CD4-positive, alpha-beta T cell (primary cell): ENCODE measurements at regions of chr17 and their contacts with region 1.

Region 1: DNA sequence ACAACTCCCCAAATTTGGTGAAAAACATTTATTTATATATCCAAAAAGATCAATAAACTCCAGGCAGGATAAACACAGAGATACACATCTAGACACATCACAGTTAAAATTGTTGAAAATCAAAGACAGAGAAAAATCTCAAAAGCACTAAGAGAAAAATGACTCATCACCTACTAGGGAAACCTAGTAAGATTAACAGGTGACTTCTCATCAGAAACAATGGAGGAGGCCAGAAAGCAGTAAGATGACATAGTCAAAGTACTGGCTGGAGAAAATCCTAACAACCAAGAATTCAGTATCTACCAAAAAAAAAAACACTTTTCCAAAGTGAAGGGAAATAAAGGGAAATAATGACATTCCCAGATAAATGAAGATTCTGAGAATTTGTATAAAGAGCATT is 33.8 kb downstream of the ULK2 start:
- DNase-seq: no peak
- ATAC-seq: no peak
- H3K4me3 ChIP-seq: no peak overlapping the region
- H3K4me3 Mint-ChIP-seq: no peak overlapping the region
- H3K27ac ChIP-seq: no peak overlapping the region
- H3K27ac Mint-ChIP-seq: no peak overlapping the region
- H3K4me1 ChIP-seq: no peaks in the 10 kb centered on the region
- H3K4me1 Mint-ChIP-seq: no peaks in the 10 kb centered on the region
- H3K27me3 ChIP-seq: no peaks in the 10 kb centered on the region
- H3K27me3 Mint-ChIP-seq: no peaks in the 10 kb centered on the region
- CTCF ChIP-seq: no peak

Region 2: GRCh38 chr17:19424934-19425868 is 408.7 kb before region 1 on chr17:
- CTCF ChIA-PET with region 1: no interaction called
- POLR2A ChIA-PET with region 1: no interaction called
- intact Hi-C with region 1: no loop called
- DNase-seq: no peak
- ATAC-seq: no peak
- H3K4me3 ChIP-seq: no peak overlapping the region
- H3K4me3 Mint-ChIP-seq: no peak overlapping the region
- H3K27ac ChIP-seq: no peak overlapping the region
- H3K27ac Mint-ChIP-seq: no peak overlapping the region
- H3K4me1 ChIP-seq: no peaks in the 10 kb centered on the region
- H3K4me1 Mint-ChIP-seq: no peaks in the 10 kb centered on the region
- H3K27me3 ChIP-seq: no peaks in the 10 kb centered on the region
- H3K27me3 Mint-ChIP-seq: peaks cover 5% of the 10 kb centered on the region
- CTCF ChIP-seq: no peak

Region 3: GRCh38 chr17:19664136-19664820 is 169.6 kb before region 1 on chr17:
- CTCF ChIA-PET with region 1: no interaction called
- POLR2A ChIA-PET with region 1: no interaction called
- intact Hi-C with region 1: loop called in 1 of 2 experiments (anchors 10 kb)
- DNase-seq: no peak
- ATAC-seq: no peak
- H3K4me3 ChIP-seq: no peak overlapping the region
- H3K4me3 Mint-ChIP-seq: no peak overlapping the region
- H3K27ac ChIP-seq: no peak overlapping the region
- H3K27ac Mint-ChIP-seq: no peak overlapping the region
- H3K4me1 ChIP-seq: no peaks in the 10 kb centered on the region
- H3K4me1 Mint-ChIP-seq: no peaks in the 10 kb centered on the region
- H3K27me3 ChIP-seq: no peaks in the 10 kb centered on the region
- H3K27me3 Mint-ChIP-seq: no peaks in the 10 kb centered on the region
- CTCF ChIP-seq: no peak

Region 4: GRCh38 chr17:19686400-19687090 is 147.4 kb before region 1 on chr17:
- CTCF ChIA-PET with region 1: no interaction called
- POLR2A ChIA-PET with region 1: no interaction called
- intact Hi-C with region 1: no loop called
- DNase-seq: no peak
- ATAC-seq: no peak
- H3K4me3 ChIP-seq: no peak overlapping the region
- H3K4me3 Mint-ChIP-seq: no peak overlapping the region
- H3K27ac ChIP-seq: no peak overlapping the region
- H3K27ac Mint-ChIP-seq: no peak overlapping the region
- H3K4me1 ChIP-seq: no peaks in the 10 kb centered on the region
- H3K4me1 Mint-ChIP-seq: no peaks in the 10 kb centered on the region
- H3K27me3 ChIP-seq: no peaks in the 10 kb centered on the region
- H3K27me3 Mint-ChIP-seq: no peaks in the 10 kb centered on the region
- CTCF ChIP-seq: no peak

Region 5: GRCh38 chr17:19753049-19753444 is 80.9 kb before region 1 on chr17:
- CTCF ChIA-PET with region 1: no interaction called
- POLR2A ChIA-PET with region 1: no interaction called
- intact Hi-C with region 1: no loop called
- DNase-seq: peak in 2 of 14 experiments; percentile 56 to 64
- ATAC-seq: no peak
- H3K4me3 ChIP-seq: no peak overlapping the region
- H3K4me3 Mint-ChIP-seq: no peak overlapping the region
- H3K27ac ChIP-seq: no peak overlapping the region
- H3K27ac Mint-ChIP-seq: no peak overlapping the region
- H3K4me1 ChIP-seq: no peaks in the 10 kb centered on the region
- H3K4me1 Mint-ChIP-seq: no peaks in the 10 kb centered on the region
- H3K27me3 ChIP-seq: peaks cover 0 to 5% of the 10 kb centered on the region in 2 experiments
- H3K27me3 Mint-ChIP-seq: peaks cover 14% of the 10 kb centered on the region
- CTCF ChIP-seq: no peak

Region 6: GRCh38 chr17:19791918-19792550 is 41.9 kb before region 1 on chr17:
- CTCF ChIA-PET with region 1: no interaction called
- POLR2A ChIA-PET with region 1: no interaction called
- intact Hi-C with region 1: loop called in 1 of 2 experiments (anchors 5 kb)
- DNase-seq: no peak
- ATAC-seq: no peak
- H3K4me3 ChIP-seq: no peak overlapping the region
- H3K4me3 Mint-ChIP-seq: no peak overlapping the region
- H3K27ac ChIP-seq: no peak overlapping the region
- H3K27ac Mint-ChIP-seq: peak overlapping the region; percentile 50
- H3K4me1 ChIP-seq: no peaks in the 10 kb centered on the region
- H3K4me1 Mint-ChIP-seq: peaks cover 4% of the 10 kb centered on the region
- H3K27me3 ChIP-seq: no peaks in the 10 kb centered on the region
- H3K27me3 Mint-ChIP-seq: no peaks in the 10 kb centered on the region
- CTCF ChIP-seq: no peak